Caco-2 (cell line): ENCODE measurements at regions of chr2 and their contacts with region 1.

Region 1: GRCh38 chr2:72150157-72150865 is 2.6 kb upstream of the CYP26B1 start:
- DNase-seq: peak; percentile 83 to 92
- H3K4me3 ChIP-seq: peak overlapping the region; percentile 45
- H3K4me3 Mint-ChIP-seq: peak overlapping the region; percentile 65
- H3K27ac Mint-ChIP-seq: no peak overlapping the region
- H3K4me1 ChIP-seq: peaks cover 40% of the 10 kb centered on the region
- H3K4me1 Mint-ChIP-seq: peaks cover 8% of the 10 kb centered on the region
- H3K27me3 ChIP-seq: peaks cover 16% of the 10 kb centered on the region
- H3K27me3 Mint-ChIP-seq: peaks cover 28% of the 10 kb centered on the region
- CTCF ChIP-seq: peak; percentile 80 to 82

Region 2: DNA sequence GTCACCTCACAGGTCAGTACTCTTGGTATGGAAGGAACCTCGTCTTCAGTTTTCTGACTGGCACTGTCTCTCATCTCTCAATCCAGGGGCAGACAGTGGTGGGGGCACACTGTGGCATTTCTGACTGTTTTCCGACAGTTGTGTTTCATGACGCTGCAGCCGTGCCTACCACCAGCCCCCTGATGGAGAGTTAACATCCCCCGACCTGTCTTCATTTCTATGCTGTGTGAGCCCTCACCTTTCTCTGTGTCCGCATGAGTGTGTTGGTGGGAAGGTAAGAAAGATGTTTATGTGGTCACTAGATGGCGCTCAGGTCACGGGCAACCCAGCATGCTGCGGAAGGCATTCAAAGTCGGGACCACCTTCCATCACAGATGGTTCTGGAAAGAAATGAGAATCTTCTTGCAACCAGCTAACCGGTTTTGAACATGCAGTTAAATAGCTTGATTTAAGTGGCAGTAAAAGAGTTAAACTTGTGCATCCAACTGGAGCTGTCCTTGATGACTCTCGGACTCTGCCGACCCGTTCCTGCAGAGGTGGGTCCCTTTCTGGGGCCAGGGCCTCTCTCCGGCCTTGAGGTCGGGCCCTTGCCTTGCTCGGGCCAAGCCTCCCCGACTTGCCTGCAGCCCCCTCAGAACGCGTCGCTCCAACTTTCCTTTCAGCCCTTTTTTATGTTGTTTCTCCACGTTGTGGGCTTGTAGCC is 604.6 kb before region 1 on chr2:
- CTCF ChIA-PET with region 1: interaction called, 5 read pairs
- POLR2A ChIA-PET with region 1: no interaction called
- intact Hi-C with region 1: loop called (anchors 1 kb)
- DNase-seq: peak; percentile 64 to 72
- H3K4me3 ChIP-seq: no peak overlapping the region
- H3K4me3 Mint-ChIP-seq: no peak overlapping the region
- H3K27ac Mint-ChIP-seq: no peak overlapping the region
- H3K4me1 ChIP-seq: no peaks in the 10 kb centered on the region
- H3K4me1 Mint-ChIP-seq: peaks cover 7% of the 10 kb centered on the region
- H3K27me3 ChIP-seq: no peaks in the 10 kb centered on the region
- H3K27me3 Mint-ChIP-seq: peaks cover 4% of the 10 kb centered on the region
- CTCF ChIP-seq: peak; percentile 75 to 85

Region 3: GRCh38 chr2:71798266-71799012 is 351.9 kb before region 1 on chr2:
- CTCF ChIA-PET with region 1: interaction called, 11 read pairs
- POLR2A ChIA-PET with region 1: no interaction called
- intact Hi-C with region 1: loop called (anchors 2 kb)
- DNase-seq: peak; percentile 71 to 80
- H3K4me3 ChIP-seq: no peak overlapping the region
- H3K4me3 Mint-ChIP-seq: no peak overlapping the region
- H3K27ac Mint-ChIP-seq: no peak overlapping the region
- H3K4me1 ChIP-seq: peaks cover 32% of the 10 kb centered on the region
- H3K4me1 Mint-ChIP-seq: peaks cover 28% of the 10 kb centered on the region
- H3K27me3 ChIP-seq: no peaks in the 10 kb centered on the region
- H3K27me3 Mint-ChIP-seq: no peaks in the 10 kb centered on the region
- CTCF ChIP-seq: peak; percentile 88 to 92

Region 4: GRCh38 chr2:71923887-71924533 is 226.3 kb before region 1 on chr2:
- CTCF ChIA-PET with region 1: interaction called, 82 read pairs
- POLR2A ChIA-PET with region 1: no interaction called
- intact Hi-C with region 1: loop called (anchors 1 kb)
- DNase-seq: peak; percentile 71 to 76
- H3K4me3 ChIP-seq: no peak overlapping the region
- H3K4me3 Mint-ChIP-seq: no peak overlapping the region
- H3K27ac Mint-ChIP-seq: no peak overlapping the region
- H3K4me1 ChIP-seq: peaks cover 6% of the 10 kb centered on the region; the same call in 1 of the 2 replicates
- H3K4me1 Mint-ChIP-seq: no peaks in the 10 kb centered on the region
- H3K27me3 ChIP-seq: no peaks in the 10 kb centered on the region
- H3K27me3 Mint-ChIP-seq: no peaks in the 10 kb centered on the region
- CTCF ChIP-seq: peak; percentile 81 to 89

Region 5: DNA sequence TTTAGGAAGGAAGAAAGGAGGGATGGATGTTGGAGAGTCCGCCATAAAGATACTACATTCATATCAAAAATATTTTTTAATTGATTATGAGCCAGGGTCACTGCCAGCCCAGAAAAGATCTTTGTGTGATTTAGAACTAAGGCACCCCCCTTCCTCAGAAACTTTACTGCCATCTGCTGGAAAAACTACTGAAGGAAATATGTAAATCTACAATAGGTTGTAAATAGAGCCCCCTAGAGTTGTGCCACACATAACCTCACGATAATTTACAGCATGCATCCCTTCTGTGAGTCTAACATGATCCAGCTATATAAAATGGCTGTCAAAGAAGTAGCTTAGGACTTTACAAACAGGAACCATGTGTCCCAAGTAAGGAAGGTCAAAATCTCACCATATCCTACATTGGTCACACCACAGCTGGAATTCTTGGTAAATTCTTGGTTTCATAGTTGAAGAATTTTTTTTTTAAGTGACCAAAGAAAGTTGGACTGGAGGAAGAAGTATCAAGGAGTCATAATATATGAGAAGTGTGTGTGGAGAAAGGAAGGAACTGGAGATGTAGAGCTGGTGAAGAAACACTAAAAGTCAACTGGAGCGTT is 155.1 kb before region 1 on chr2:
- CTCF ChIA-PET with region 1: no interaction called
- POLR2A ChIA-PET with region 1: no interaction called
- intact Hi-C with region 1: loop called (anchors 1 kb)
- DNase-seq: peak in 1 of 2 experiments; percentile 23
- H3K4me3 ChIP-seq: no peak overlapping the region
- H3K4me3 Mint-ChIP-seq: no peak overlapping the region
- H3K27ac Mint-ChIP-seq: no peak overlapping the region
- H3K4me1 ChIP-seq: no peaks in the 10 kb centered on the region
- H3K4me1 Mint-ChIP-seq: no peaks in the 10 kb centered on the region
- H3K27me3 ChIP-seq: no peaks in the 10 kb centered on the region
- H3K27me3 Mint-ChIP-seq: no peaks in the 10 kb centered on the region
- CTCF ChIP-seq: peak; percentile 53 to 58

Region 6: DNA sequence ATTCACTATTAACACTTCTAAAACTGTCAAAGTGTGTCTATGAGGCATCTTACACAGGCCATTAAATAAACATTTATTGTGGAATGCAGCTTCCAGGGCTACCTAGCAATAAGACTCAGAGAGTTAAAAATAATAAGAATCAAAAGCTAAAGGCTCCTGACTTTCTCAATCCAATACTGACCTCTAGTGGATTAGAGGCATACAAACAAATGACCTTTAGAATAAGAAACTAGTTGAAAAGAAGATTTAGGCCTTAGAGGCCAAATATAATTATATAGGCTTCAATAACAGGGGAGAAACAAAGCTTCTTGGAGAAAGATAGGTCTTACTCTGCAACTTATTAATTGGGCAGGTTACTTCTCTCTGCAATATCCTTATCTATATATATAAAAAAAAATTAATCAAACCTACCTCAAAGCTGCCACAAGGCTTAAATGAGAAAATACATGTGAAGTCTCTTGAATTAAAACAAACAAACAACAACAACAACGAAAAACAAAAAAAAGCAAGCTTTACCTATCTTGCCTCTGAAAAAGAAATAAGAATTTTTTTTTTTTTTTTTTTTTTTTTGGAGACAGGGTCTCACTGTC is 429.4 kb after region 1 on chr2:
- CTCF ChIA-PET with region 1: interaction called, 15 read pairs
- POLR2A ChIA-PET with region 1: no interaction called
- intact Hi-C with region 1: loop called (anchors 1 kb)
- DNase-seq: peak in 1 of 2 experiments; percentile 22
- H3K4me3 ChIP-seq: no peak overlapping the region
- H3K4me3 Mint-ChIP-seq: no peak overlapping the region
- H3K27ac Mint-ChIP-seq: no peak overlapping the region
- H3K4me1 ChIP-seq: peaks cover 15% of the 10 kb centered on the region
- H3K4me1 Mint-ChIP-seq: peaks cover 6% of the 10 kb centered on the region
- H3K27me3 ChIP-seq: no peaks in the 10 kb centered on the region
- H3K27me3 Mint-ChIP-seq: no peaks in the 10 kb centered on the region
- CTCF ChIP-seq: peak; percentile 69 to 81